ENCODE measurements at regions of chr3 and their contacts with region 1.

Region 1: DNA sequence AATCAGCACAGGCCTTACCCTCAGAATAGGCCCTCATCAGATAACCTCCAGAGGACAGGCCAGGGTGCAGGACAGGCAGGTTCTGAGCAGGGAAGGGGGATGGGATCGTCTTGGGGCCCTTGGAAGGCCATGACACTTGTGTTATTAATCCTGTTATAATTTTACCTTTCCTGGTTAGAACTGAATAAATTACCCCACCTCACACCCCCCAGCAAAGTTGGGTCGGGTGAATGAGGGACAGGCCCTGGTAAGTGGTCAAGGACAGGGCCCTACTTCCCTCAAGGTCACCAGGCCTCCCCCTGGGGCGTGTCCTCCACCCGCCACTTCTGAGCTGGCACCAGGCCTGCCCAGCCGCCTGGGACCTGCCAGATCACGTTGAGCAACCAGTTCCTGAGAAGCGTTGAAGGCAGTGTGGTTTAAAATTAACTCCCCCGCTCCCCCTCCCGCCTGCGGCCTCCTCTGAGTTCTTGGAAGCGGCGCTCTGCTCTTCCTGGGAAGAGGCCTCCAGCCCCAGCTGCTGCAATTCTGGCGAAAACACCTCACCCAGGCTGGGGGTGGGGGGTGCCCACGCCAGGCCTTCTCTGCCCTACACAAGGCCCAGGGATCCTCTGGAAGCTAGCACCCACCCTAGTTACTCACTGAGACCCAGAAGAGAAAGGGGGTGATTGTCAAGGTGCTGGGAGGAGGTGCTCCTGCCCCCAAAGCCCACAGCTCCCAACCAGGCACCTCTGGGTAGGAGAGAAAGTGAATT is 10.6 kb downstream of the CISH start:
- DNase-seq: peak; percentile 52 to 79 (median 57)
- H3K4me3 ChIP-seq: peak overlapping the region; percentile 26
- H3K4me3 Mint-ChIP-seq: peak overlapping the region; percentile 48 to 81 (median 76)
- H3K27ac ChIP-seq: peak overlapping the region; percentile 84
- H3K27ac Mint-ChIP-seq: peak overlapping the region; percentile 90 to 98 (median 96)
- H3K4me1 ChIP-seq: peaks cover 79% of the 10 kb centered on the region
- H3K4me1 Mint-ChIP-seq: peaks cover 68 to 83% (median 78%) of the 10 kb centered on the region in 3 donors
- H3K27me3 ChIP-seq: no peaks in the 10 kb centered on the region
- H3K27me3 Mint-ChIP-seq: no peaks in the 10 kb centered on the region

Region 2: DNA sequence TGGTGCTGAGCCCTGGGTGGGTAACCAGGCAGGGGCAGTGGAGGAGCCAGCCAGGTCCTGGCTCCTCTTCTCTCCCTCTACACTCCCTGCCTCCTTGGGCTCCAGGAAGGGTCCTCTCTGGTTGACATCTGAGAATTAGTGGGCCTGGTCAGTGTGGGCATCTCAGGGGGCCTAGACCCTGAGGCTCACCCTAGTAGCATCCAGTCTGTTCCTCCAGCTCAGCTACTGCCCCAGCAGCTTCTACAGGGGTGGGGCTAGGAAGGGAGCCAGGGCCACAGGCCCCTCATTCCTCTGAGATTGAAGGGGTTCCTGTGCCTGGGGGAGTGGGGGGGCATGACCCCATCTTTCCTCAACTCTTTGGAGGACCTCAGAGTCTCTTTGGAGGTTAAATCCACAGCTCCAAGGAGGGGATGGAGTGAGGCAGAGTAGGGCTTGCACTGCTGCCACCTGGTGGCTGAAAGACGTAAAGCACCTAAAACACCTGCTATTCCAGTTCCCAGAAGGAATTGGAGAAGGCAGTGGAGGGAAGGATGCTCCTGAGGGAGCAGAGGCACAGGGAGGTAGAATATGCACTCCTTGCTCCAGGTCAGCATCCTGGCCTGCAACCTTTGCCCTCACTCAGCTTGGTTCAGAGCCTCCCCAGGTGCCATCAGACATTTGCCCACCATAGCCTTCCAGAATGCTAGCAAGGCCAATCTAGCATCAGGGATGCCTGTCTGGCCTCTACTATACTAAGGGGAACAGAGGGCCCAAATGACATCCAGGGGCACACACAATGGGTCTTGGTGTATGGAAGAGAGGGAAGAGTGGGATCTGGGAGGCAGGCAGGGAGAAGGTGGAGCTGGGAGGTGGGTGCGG is 58.6 kb before region 1 on chr3:
- CTCF ChIA-PET with region 1: no interaction called
- POLR2A ChIA-PET with region 1: no interaction called
- DNase-seq: peak; percentile 50 to 68 (median 53)
- H3K4me3 ChIP-seq: no peak overlapping the region
- H3K4me3 Mint-ChIP-seq: no peak overlapping the region
- H3K27ac ChIP-seq: no peak overlapping the region
- H3K27ac Mint-ChIP-seq: no peak overlapping the region
- H3K4me1 ChIP-seq: no peaks in the 10 kb centered on the region
- H3K4me1 Mint-ChIP-seq: peaks cover 0 to 2% (median 0%) of the 10 kb centered on the region in 3 donors
- H3K27me3 ChIP-seq: no peaks in the 10 kb centered on the region
- H3K27me3 Mint-ChIP-seq: peaks cover 8 to 19% of the 10 kb centered on the region in 2 donors

Region 3: DNA sequence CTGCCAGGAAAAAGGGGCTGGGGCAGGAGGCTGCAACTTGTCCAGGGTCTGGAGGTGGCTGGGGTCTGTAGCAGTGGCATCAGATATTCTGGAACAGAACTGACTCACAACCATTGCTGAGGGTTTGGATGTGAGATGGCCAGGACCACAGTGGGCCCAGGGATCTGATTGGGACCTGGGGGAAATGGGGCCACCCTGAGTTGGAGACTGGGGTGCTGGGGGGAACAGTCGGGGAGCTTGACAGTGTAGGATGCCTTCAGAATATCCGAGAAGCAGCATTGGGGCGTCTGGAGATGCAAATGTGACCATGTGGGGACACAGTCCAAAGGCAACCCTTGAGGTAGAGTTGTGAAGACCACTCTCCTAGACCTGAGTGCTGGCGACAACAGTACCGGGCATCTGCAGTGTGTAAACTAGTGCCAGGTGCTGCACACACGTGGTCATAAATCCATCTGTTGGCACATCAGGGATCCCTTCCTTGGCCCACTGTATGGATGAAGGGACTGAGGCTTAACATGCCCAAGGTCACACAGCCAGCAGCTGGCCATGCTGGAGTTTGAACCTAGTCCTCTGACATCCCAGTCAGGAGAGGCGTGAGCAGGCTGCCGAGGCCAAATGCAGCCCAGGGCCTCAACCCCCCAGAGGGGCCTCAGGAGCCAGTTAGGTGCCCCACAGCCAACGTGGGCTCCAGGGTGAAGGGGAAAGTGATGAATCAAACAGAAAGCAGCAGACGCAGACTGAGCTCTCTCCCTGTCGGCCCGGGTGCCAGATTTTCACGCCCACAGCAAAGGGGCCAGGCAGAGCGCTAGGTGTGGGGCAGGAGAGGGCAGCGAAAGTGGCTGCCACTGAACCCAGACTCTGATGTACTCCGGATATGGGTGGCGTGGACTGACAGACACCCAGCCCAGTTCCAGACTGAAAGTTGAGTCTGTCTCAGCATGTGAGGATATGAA is 12.9 kb before region 1 on chr3:
- CTCF ChIA-PET with region 1: interaction called, 724 read pairs
- POLR2A ChIA-PET with region 1: interaction called, 56 read pairs
- DNase-seq: peak in 4 of 5 donors; percentile 60 to 81 (median 64)
- H3K4me3 ChIP-seq: peak overlapping the region; percentile 9
- H3K4me3 Mint-ChIP-seq: peak overlapping the region; percentile 62 to 83 (median 72)
- H3K27ac ChIP-seq: peak overlapping the region; percentile 29
- H3K27ac Mint-ChIP-seq: peak overlapping the region; percentile 88 to 99 (median 94)
- H3K4me1 ChIP-seq: peaks cover 67% of the 10 kb centered on the region
- H3K4me1 Mint-ChIP-seq: peaks cover 54 to 72% (median 66%) of the 10 kb centered on the region in 3 donors
- H3K27me3 ChIP-seq: no peaks in the 10 kb centered on the region
- H3K27me3 Mint-ChIP-seq: no peaks in the 10 kb centered on the region